Activated T-helper 2 cell treated with anti-CD3 and anti-CD28 coated beads, Interferon-gamma antibody, Interleukin-2, Interleukin-4, amounts not matched to agents 10 μg/mL and 5 μg/mL and 100 μg/mL, durations not matched to agents 14 hours and 24 hours and 36 hours (primary cell): ENCODE measurements at regions of chr16 and their contacts with region 1.

Region 1: DNA sequence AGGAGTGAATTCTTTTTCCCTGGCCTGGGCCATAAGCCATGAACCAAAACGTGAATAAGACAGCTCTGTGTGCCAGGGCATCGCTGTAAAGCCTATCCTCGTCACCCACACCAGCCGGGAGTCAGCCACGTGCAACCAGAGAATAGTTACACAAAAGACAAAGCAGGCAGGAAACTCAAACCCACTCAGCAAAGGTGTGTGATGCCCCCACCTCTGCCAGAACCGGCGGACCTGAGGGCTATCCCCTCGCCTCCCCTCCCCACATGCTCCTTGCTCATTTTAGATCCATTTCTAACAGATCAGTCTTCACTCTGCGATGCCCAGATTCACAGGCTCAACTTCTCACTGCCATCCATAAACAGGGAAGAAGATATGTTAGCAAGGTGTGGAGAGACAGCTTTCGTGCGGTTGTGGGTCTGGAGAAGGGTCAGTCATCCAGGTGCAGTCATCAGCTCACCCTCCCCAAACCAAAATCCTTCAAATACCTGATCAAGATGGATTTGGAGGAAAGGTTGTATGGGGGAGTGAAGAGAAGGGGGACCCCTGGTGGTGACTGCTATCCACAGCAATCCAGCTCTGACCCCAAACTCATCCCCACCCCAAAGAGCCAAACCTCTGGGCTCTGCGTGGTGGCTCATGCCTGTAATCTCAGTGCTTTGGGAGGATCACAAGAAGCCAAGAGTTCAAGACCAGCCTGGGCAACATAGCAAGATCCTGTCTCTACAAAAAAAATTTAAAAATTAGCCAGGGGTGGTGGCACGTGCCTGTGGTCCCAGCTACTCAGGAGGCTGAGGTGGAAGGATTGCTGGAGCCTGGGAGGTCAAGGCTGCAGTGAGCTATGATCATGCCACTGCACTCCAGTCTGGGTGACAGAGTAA is 219.2 kb downstream of the C16orf78 start:
- DNase-seq: no peak
- H3K4me3 Mint-ChIP-seq: no peak overlapping the region
- H3K27ac Mint-ChIP-seq: no peak overlapping the region
- H3K4me1 Mint-ChIP-seq: peaks cover 2% of the 10 kb centered on the region
- H3K27me3 Mint-ChIP-seq: peaks cover 9% of the 10 kb centered on the region

Region 2: DNA sequence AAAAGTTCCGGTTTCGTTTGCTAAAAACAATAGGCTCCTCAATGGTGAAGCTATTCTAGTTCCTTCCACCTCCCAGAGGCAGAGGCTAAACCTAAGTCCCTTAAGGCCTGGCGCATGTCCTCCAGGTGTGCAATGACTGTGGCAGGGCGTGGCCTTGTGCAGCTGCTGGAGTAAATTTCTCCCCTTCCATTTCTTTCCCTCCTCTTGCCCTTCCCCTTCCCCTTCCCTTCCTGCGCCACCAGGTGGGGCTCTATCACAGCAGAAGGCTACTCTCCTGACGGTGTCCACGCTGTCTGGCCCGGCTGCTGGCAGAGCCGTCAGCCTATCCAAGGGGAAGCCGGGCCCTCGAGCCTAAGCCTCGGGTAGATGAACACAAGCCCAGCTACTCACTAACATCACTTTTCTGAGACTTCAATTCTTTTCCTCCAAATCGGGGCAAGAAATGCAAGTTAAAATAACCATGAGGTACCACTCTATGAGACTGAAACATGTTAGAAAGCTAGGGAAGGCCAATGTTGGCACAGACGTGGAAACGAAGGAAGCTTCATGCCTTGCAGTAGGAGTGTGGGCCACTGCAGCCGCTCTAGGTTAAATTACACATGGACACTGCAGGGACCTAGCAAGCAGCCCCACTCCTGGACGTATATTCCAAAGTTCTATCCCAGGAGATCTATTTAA is 184.8 kb before region 1 on chr16:
- intact Hi-C with region 1: loop called (anchors 2 kb)
- DNase-seq: peak; percentile 45
- H3K4me3 Mint-ChIP-seq: no peak overlapping the region
- H3K27ac Mint-ChIP-seq: no peak overlapping the region
- H3K4me1 Mint-ChIP-seq: peaks cover 2% of the 10 kb centered on the region
- H3K27me3 Mint-ChIP-seq: peaks cover 2% of the 10 kb centered on the region

Region 3: DNA sequence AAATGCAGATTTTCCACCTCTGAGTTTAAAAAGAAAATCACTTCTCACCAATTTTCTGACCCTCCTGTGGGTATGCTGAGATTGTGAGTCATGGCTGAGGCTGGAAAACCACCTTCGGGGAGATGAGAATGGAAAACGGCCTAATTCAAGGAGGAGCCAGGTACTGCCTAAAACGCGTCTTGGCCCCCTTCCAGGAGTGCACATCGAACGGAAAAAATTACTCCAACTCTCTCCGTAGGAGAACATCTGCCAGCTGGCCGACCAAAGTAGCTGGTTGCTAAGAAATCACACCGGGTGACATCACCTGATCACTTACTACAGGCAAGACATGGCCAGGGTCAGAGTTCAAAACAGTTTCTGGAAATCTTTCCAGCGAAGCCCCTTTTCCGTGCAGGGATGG is 155.5 kb after region 1 on chr16:
- intact Hi-C with region 1: no loop called
- DNase-seq: no peak
- H3K4me3 Mint-ChIP-seq: no peak overlapping the region
- H3K27ac Mint-ChIP-seq: no peak overlapping the region
- H3K4me1 Mint-ChIP-seq: no peaks in the 10 kb centered on the region
- H3K27me3 Mint-ChIP-seq: peaks cover 2% of the 10 kb centered on the region